H1 (cell line): ENCODE measurements at regions of chr22 and their contacts with region 1.

Region 1: DNA sequence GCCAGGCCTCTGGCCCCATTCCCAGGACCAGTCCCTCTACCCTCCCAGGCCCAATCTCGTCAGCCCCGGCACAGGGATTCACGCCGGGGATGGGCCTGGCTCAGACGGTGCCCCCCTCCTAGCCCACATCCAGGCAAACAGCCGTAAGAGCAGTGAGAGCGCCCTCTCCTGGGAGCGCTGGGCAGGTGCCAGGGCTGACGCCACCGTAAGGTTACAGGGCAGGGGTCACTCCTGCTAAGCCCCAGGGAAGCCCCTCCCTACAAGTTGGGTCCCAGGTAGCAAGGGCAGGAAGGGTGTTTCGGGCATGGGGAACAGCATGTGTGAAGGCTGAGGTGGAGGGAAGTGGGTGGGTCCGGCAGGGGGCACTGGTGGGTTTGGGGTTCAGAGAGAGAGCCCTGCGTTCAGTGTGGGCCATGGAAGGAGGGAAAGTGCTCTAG is 19.2 kb upstream of the PPARA start:
- DNase-seq: peak; percentile 50 to 91
- H3K4me3 ChIP-seq: no peak overlapping the region
- H3K27ac ChIP-seq: no peak overlapping the region
- H3K4me1 ChIP-seq: no peaks in the 10 kb centered on the region
- H3K27me3 ChIP-seq: no peaks in the 10 kb centered on the region
- CTCF ChIP-seq: peak; percentile 91 to 98 (median 98)
- EP300 ChIP-seq: no peak
- POLR2A ChIP-seq: no peak
- RAD21 ChIP-seq: peak; percentile 69 to 76

Region 2: GRCh38 chr22:45942787-45943493 is 188.2 kb before region 1 on chr22:
- CTCF ChIA-PET with region 1: no interaction called
- POLR2A ChIA-PET with region 1: no interaction called
- DNase-seq: no peak
- H3K4me3 ChIP-seq: no peak overlapping the region
- H3K27ac ChIP-seq: no peak overlapping the region
- H3K4me1 ChIP-seq: no peaks in the 10 kb centered on the region
- H3K27me3 ChIP-seq: no peaks in the 10 kb centered on the region; a peak in 1 of 7 replicates
- CTCF ChIP-seq: no peak
- EP300 ChIP-seq: no peak
- POLR2A ChIP-seq: no peak
- RAD21 ChIP-seq: no peak

Region 3: GRCh38 chr22:46071451-46072109 is 59.6 kb before region 1 on chr22:
- CTCF ChIA-PET with region 1: no interaction called
- POLR2A ChIA-PET with region 1: no interaction called
- DNase-seq: peak in 1 of 2 experiments; percentile 76
- H3K4me3 ChIP-seq: peak overlapping the region; percentile 47 to 73 (median 56)
- H3K27ac ChIP-seq: no peak overlapping the region
- H3K4me1 ChIP-seq: peaks cover 0 to 36% (median 26%) of the 10 kb centered on the region in 4 experiments; a peak in 6 of 7 replicates
- H3K27me3 ChIP-seq: peaks cover 8 to 48% (median 35%) of the 10 kb centered on the region in 4 experiments
- CTCF ChIP-seq: no peak
- EP300 ChIP-seq: no peak
- POLR2A ChIP-seq: no peak
- RAD21 ChIP-seq: no peak

Region 4: GRCh38 chr22:46116491-46116958 is 14.6 kb before region 1 on chr22:
- CTCF ChIA-PET with region 1: interaction called, 40 read pairs
- POLR2A ChIA-PET with region 1: no interaction called
- DNase-seq: peak; percentile 67 to 96
- H3K4me3 ChIP-seq: no peak overlapping the region
- H3K27ac ChIP-seq: no peak overlapping the region
- H3K4me1 ChIP-seq: peaks cover 0 to 8% (median 7%) of the 10 kb centered on the region in 4 experiments; a peak in 4 of 7 replicates
- H3K27me3 ChIP-seq: no peaks in the 10 kb centered on the region; a peak in 2 of 7 replicates
- CTCF ChIP-seq: peak; percentile 75 to 99 (median 93)
- EP300 ChIP-seq: no peak
- POLR2A ChIP-seq: no peak
- RAD21 ChIP-seq: peak; percentile 94 to 96

Region 5: DNA sequence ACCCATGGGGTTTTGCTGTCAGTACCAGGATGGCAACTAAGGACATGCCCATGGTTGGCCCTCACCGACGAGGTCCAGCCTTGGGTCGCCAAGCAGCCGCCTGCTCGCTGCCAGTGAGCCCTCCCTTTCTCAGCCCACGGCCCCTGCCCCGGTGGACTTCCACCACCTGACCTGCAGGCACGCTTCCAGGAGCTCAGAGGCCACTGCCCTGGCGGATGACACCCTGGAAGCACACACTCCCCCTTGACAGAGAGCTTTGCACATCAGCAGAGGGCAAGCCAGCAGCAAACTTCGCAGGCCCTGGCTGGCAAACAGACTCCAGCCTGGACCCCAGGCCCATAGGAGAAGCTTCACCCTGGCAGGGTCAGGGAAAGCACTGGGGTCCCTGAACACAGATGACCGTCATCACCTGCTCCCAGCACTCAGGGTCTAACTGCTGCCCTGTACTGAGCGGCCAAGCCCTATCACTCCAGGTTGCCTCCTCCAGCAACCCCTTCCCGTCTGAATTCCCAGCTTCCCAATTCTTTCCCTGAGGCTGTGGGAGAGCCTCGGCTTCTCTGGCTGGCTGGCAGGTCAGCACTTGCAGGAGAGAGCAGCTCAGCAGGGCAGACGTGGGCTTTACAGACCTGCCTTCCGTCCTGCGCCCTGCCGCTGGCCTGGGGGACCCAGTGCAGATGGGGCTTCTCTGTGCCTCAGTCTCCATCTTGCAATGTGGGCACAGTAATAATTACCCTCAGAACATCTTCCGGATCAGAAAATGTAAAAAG is 16.5 kb after region 1 on chr22:
- CTCF ChIA-PET with region 1: interaction called, 15 read pairs
- POLR2A ChIA-PET with region 1: interaction called, 3 read pairs
- DNase-seq: peak in 1 of 2 experiments; percentile 40
- H3K4me3 ChIP-seq: no peak overlapping the region
- H3K27ac ChIP-seq: no peak overlapping the region
- H3K4me1 ChIP-seq: peaks cover 0 to 8% (median 2%) of the 10 kb centered on the region in 4 experiments; a peak in 2 of 7 replicates
- H3K27me3 ChIP-seq: peaks cover 6 to 42% (median 35%) of the 10 kb centered on the region in 4 experiments
- CTCF ChIP-seq: no peak
- EP300 ChIP-seq: no peak
- POLR2A ChIP-seq: no peak
- RAD21 ChIP-seq: no peak